CD4-positive, alpha-beta T cell (primary cell): ENCODE measurements at regions of chr1 and their contacts with region 1.

Region 1: DNA sequence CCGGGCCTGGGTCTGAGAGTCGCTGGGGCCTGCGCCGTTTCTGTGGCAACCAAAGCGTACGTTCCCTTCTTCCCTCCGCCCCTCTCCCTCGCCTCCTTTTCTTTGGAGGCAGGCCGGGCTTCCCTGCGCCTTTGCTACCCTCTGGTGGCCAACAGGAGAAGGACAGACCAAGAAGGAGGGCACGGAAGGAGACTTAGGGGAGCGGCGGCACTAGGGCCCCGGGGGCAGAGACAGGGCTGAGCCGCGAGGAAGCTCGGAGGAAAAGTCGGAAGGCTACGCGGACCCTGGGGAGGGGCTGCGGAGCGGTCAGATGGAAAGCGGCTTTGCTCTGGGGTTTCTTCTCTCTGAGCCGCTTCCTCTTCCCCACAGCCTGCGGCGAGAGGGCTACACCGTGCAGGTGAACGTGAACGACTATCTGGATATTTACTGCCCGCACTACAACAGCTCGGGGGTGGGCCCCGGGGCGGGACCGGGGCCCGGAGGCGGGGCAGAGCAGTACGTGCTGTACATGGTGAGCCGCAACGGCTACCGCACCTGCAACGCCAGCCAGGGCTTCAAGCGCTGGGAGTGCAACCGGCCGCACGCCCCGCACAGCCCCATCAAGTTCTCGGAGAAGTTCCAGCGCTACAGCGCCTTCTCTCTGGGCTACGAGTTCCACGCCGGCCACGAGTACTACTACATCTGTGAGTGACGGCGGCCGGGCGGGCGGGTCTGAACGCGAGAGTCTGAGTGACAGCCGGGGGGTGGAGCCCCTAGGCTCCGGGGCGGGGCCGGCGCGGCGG is 6.3 kb downstream of the EFNA3 start:
- DNase-seq: peak; percentile 80 to 95 (median 88)
- ATAC-seq: peak; percentile 75
- H3K4me3 ChIP-seq: peak overlapping the region; percentile 92
- H3K4me3 Mint-ChIP-seq: peak overlapping the region; percentile 89
- H3K27ac ChIP-seq: peak overlapping the region; percentile 65 to 68
- H3K27ac Mint-ChIP-seq: peak overlapping the region; percentile 82
- H3K4me1 ChIP-seq: peaks cover 67% of the 10 kb centered on the region
- H3K4me1 Mint-ChIP-seq: peaks cover 51% of the 10 kb centered on the region
- H3K27me3 ChIP-seq: peaks cover 41 to 46% of the 10 kb centered on the region in 2 experiments
- H3K27me3 Mint-ChIP-seq: peaks cover 36% of the 10 kb centered on the region
- CTCF ChIP-seq: peak; percentile 76

Region 2: GRCh38 chr1:154404984-154405761 is 679.7 kb before region 1 on chr1 and contains the start of gene IL6R:
- CTCF ChIA-PET with region 1: no interaction called
- POLR2A ChIA-PET with region 1: no interaction called
- intact Hi-C with region 1: loop called in 1 of 2 experiments (anchors 10 kb)
- DNase-seq: peak; percentile 57 to 91 (median 76)
- ATAC-seq: peak; percentile 65
- H3K4me3 ChIP-seq: peak within 1 kb of the TSS; percentile 89
- H3K4me3 Mint-ChIP-seq: peak within 1 kb of the TSS; percentile 96
- H3K27ac ChIP-seq: peak within 1 kb of the TSS; percentile 81 to 92
- H3K27ac Mint-ChIP-seq: peak within 1 kb of the TSS; percentile 95
- H3K4me1 ChIP-seq: peaks cover 88% of the 10 kb centered on the region
- H3K4me1 Mint-ChIP-seq: peaks cover 84% of the 10 kb centered on the region
- H3K27me3 ChIP-seq: no peaks in the 10 kb centered on the region
- H3K27me3 Mint-ChIP-seq: no peaks in the 10 kb centered on the region
- CTCF ChIP-seq: peak; percentile 73
- total RNA-seq, gene IL6R: 31.7 to 35.0 TPM

Region 3: GRCh38 chr1:154669464-154670282 is 415.2 kb before region 1 on chr1:
- CTCF ChIA-PET with region 1: no interaction called
- POLR2A ChIA-PET with region 1: no interaction called
- intact Hi-C with region 1: loop called in 1 of 2 experiments (anchors 2 kb)
- DNase-seq: peak; percentile 61 to 88 (median 70)
- ATAC-seq: peak; percentile 100
- H3K4me3 ChIP-seq: no peak overlapping the region
- H3K4me3 Mint-ChIP-seq: no peak overlapping the region
- H3K27ac ChIP-seq: no peak overlapping the region
- H3K27ac Mint-ChIP-seq: no peak overlapping the region
- H3K4me1 ChIP-seq: no peaks in the 10 kb centered on the region
- H3K4me1 Mint-ChIP-seq: peaks cover 5% of the 10 kb centered on the region
- H3K27me3 ChIP-seq: no peaks in the 10 kb centered on the region
- H3K27me3 Mint-ChIP-seq: no peaks in the 10 kb centered on the region
- CTCF ChIP-seq: peak; percentile 83

Region 4: DNA sequence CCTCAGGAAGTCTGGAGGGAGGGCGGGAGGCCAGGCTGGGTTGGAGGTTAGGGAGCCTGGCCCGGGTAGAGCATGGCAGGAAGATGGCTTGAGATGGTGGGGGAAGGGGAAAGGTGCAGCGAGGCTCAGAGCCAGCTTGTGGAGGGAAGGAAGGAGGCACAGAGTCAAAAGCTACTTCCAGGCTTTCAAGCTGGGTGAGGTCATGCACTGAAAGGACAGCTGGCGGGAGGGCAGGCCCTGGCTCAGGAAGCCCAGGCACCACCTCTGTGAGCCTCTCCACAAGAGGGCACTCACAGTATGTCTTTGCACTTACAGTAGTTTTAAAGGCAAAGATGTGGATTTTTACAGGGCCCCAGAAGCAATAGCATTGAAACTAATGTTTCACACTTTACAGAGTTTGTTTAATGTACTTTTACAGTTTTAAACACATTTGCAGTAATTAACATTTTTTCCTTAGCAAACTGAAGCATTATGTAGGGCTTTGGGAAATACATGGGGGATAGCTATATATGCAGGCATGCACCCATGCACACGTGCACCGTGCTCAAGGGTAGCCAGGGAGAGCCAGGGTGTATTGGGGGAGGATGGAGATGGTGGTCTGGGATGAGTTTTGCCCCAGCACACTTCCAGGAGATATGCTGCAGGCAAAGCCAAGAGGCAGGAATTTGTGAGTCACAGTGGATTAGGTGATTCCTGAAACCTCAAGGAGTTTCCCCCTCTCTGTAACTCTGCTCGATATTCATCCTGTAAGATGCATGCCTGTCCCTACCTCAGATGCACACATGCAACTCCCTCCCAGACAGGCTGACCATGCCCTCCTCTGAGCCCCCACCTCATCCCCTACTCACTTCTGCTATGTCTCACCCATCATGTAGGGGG is 39.9 kb before region 1 on chr1:
- CTCF ChIA-PET with region 1: interaction called, 11 read pairs
- POLR2A ChIA-PET with region 1: no interaction called
- intact Hi-C with region 1: loop called (anchors 1 kb)
- DNase-seq: peak; percentile 42 to 85 (median 52)
- ATAC-seq: peak; percentile 93
- H3K4me3 ChIP-seq: no peak overlapping the region
- H3K4me3 Mint-ChIP-seq: no peak overlapping the region
- H3K27ac ChIP-seq: no peak overlapping the region
- H3K27ac Mint-ChIP-seq: no peak overlapping the region
- H3K4me1 ChIP-seq: peaks cover 7% of the 10 kb centered on the region
- H3K4me1 Mint-ChIP-seq: peaks cover 9% of the 10 kb centered on the region
- H3K27me3 ChIP-seq: no peaks in the 10 kb centered on the region
- H3K27me3 Mint-ChIP-seq: no peaks in the 10 kb centered on the region
- CTCF ChIP-seq: peak; percentile 72

Region 5: DNA sequence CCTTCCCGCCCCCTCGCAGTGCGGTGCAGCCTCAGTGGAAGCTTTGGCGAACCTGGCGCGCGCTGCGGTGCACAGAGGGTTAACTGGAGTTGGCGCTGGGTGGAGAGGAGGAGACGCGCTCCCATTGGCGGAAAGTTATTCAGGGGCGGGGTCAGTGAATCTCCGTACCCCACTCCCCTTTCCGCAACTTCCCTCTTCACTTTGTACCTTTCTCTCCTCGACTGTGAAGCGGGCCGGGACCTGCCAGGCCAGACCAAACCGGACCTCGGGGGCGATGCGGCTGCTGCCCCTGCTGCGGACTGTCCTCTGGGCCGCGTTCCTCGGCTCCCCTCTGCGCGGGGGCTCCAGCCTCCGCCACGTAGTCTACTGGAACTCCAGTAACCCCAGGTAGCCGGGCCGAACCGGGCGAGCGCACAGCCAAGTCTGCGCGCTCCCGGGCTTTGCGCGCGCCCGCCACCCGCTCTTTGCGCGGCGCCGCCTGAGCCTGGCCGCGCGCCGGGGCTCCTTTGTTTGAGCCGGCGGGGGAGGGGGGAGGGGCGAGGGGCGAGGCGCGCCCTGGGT is 21.3 kb before region 1 on chr1 and contains the start of gene EFNA4:
- CTCF ChIA-PET with region 1: interaction called, 78 read pairs
- POLR2A ChIA-PET with region 1: interaction called, 23 read pairs
- intact Hi-C with region 1: loop called (anchors 1 kb)
- DNase-seq: peak; percentile 69 to 92 (median 80)
- ATAC-seq: peak; percentile 90
- H3K4me3 ChIP-seq: peak within 1 kb of the TSS; percentile 76
- H3K4me3 Mint-ChIP-seq: peak within 1 kb of the TSS; percentile 96
- H3K27ac ChIP-seq: peak within 1 kb of the TSS in 1 of 2 donors; percentile 61
- H3K27ac Mint-ChIP-seq: peak within 1 kb of the TSS; percentile 70
- H3K4me1 ChIP-seq: peaks cover 41% of the 10 kb centered on the region
- H3K4me1 Mint-ChIP-seq: peaks cover 32% of the 10 kb centered on the region
- H3K27me3 ChIP-seq: no peaks in the 10 kb centered on the region
- H3K27me3 Mint-ChIP-seq: no peaks in the 10 kb centered on the region
- CTCF ChIP-seq: no peak
- total RNA-seq, gene EFNA4: 2.4 to 3.3 TPM

Region 6: DNA sequence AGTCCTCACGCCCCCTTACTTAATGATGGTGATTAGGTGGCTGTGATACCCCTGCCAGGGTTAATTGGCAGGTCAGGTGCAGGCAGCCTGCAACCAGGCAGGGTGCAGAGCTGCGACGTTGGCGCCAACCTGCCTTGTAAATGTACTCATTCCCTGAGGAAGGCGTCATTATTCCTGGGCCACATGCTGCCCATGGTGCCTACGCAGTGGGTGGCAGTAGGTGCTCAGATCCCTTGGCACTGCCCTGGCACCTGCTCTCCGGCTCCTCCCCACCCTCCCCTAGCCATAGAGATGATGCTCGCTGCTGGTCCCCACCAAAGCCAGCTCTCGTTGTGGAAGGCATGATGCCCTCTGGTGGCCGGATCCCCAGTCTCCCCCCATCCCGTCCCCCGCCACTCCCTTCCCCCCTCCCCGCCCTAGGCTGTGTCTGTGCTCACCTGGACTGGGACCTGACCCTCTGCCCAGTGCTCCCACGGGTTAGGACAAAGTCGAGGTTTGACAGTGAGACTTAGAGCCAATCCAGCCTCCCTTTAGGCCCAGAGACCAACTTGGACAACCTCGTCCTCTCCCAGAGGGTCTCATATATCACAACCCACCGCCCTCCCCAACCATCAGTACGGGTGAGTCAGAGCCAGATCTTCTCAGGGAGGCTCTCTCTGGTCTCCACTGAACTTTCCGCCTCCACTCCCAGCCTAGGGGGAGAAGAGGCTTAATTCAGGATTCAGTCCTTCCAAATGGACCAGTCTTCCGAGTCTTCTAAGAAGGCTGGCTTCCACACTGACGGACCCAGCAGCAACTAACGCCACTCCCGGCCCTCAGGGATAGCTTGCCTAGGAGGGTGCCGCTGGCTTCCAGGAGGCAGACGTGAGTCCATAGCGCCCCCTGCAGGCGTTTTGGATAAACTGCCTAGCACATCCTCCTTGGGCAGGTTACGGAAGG is 82.5 kb after region 1 on chr1:
- CTCF ChIA-PET with region 1: interaction called, 10 read pairs
- POLR2A ChIA-PET with region 1: interaction called, 17 read pairs
- intact Hi-C with region 1: no loop called
- DNase-seq: peak; percentile 78 to 93 (median 84)
- ATAC-seq: peak; percentile 73
- H3K4me3 ChIP-seq: peak overlapping the region; percentile 9
- H3K4me3 Mint-ChIP-seq: peak overlapping the region; percentile 21
- H3K27ac ChIP-seq: no peak overlapping the region
- H3K27ac Mint-ChIP-seq: no peak overlapping the region
- H3K4me1 ChIP-seq: peaks cover 25% of the 10 kb centered on the region
- H3K4me1 Mint-ChIP-seq: peaks cover 26% of the 10 kb centered on the region
- H3K27me3 ChIP-seq: peaks cover 0 to 7% of the 10 kb centered on the region in 2 experiments
- H3K27me3 Mint-ChIP-seq: peaks cover 3% of the 10 kb centered on the region
- CTCF ChIP-seq: peak; percentile 81